ENCODE measurements at regions of chr11 and their contacts with region 1.

Region 1: GRCh38 chr11:119339589-119340343 is 917 bp downstream of the C1QTNF5 start:
- DNase-seq: peak; percentile 87
- ATAC-seq: peak; percentile 66

Region 2: DNA sequence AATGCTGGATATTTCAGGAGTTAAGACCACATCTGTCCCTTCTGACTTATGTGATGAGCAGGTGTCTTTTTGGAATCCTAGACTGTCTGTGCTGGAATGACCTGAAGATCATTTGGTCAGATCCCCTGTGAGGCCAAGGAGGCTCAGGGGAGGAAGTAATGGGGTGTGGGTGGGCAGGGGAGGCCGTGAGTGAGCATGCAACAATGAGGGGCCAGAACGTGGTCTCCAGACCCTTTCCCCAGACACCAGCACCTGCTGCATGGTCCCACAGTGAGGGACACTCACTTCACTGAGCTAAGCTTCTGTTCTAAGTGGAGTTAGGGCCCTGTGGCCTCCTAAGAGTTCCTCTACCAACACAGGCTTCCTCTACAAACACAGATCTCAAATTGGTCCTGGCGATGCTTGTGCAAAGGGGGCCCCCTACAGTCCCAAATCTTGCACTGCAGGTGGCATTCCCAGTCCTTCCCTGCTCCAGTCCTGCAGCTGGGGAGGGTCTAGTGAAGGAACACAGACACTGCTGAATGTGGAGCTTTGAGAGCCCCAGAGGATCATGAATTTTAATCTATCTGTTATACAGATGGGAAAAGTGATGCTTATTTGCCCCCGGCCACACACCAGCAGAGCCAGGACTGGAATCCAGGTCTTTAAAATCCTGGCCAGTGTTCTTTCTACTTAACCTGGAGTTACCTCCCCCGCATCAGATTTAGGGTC is 34.3 kb after region 1 on chr11:
- intact Hi-C with region 1: loop called (anchors 2 kb)
- DNase-seq: peak; percentile 69
- ATAC-seq: no peak